GM10248 (cell line): ENCODE measurements at regions of chr13 and their contacts with region 1.

Region 1: DNA sequence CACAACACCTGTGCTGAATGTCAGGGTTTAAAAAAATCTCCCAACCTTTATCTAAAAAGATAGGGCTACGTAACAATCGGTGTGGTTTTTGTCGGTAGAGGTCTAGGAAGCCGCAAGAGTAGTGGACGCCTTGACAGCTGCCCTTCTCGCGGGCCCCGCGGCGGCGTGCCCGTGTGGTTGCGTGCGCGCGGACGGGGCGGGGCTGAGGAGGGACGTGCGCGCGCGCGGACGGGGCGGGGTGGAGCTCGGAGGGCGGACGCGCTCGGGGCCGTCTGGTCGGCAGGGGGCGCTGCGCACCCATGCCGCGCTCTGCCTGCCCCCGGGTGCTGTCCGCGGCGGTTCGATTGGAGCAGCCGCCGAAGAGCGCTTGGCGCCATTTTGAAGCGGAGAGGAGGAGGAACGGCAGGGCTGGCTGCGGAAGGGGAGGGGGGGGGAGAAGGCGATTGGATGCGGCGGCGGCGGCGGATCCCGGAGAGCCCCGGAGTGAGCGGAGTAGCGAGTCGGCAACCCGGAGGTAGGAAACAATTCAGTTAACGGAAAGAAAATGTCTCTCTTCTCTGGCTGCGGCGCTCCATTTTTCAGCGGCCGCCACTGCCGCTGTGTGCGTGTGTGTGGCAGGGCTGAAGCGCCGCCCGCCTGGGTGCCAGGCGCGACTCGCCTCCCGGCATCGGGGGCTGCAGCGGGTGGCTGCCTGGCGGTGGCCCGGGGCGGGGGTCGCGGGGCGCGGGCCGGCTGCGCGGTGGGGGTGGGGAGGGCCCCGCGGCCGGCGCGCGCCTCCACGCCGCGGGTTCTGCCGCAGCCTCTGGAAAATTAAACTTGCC is at the start of gene PDS5B:
- DNase-seq: peak; percentile 93
- CTCF ChIP-seq: peak; percentile 90

Region 2: DNA sequence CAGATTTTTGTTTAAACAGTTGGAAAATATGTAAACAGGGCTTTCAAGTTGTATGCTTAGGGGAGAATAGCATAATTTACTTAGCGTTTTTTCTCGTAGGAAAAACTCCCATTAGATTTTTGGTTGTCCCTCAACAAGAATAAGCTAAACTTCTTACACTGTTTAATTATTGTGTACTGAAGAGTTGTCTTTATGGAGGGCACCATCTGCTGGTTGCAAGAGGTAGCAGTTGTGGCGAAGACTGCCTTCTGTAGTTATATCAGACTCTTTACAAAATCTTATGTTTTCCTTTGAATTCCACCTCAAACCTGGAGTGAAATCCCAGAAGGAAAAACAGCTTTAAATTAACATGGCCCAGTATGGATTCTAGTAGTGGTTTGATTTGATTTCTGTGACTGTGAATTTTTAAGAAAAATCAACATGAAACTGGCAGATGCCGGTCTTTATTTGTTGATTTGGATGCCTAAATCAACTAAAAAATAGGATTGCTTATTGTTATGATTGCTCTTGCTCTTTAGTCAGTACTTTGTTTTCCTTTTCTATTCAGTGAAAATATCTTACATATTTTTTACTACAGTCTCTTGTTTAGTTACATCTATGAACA is 53.3 kb after region 1 on chr13:
- CTCF ChIA-PET with region 1: interaction called, 15 read pairs
- POLR2A ChIA-PET with region 1: no interaction called
- DNase-seq: peak; percentile 52
- CTCF ChIP-seq: peak; percentile 74

Region 3: GRCh38 chr13:32659736-32660626 is 73.7 kb after region 1 on chr13:
- CTCF ChIA-PET with region 1: interaction called, 10 read pairs
- POLR2A ChIA-PET with region 1: no interaction called
- DNase-seq: no peak
- CTCF ChIP-seq: no peak

Region 4: DNA sequence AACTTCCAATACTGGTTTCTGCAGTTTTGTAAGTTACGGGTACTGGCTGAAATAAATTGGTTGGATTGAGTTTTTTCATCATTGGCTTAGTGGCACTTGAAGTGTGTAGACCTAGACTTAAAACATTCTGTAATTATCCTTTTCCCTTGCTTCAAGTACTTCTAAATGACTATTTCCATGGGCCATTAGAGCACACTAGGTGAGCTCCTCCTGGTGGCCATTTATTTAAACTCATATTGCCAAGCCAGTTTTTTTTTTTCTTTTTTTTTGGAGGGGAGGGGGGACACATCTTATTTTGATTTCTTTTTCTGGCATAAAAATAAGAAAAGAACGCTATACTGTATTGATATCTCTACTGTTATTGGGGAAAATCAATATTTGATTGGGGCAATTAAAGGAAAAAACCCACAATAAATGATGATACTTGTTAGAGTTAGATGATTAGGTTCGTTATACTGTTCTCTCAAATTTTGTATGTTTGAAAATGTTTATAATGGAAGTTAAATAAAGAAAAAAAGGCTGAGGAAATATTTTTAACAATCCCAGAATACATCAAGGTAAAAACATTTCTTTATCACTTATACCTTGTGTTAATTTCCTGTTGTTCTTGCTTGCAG is 82.8 kb after region 1 on chr13:
- CTCF ChIA-PET with region 1: interaction called, 15 read pairs
- POLR2A ChIA-PET with region 1: no interaction called
- DNase-seq: peak; percentile 11
- CTCF ChIP-seq: peak; percentile 48